MCF 10A (cell line): ENCODE measurements at regions of chr2 and their contacts with region 1.

Region 1: DNA sequence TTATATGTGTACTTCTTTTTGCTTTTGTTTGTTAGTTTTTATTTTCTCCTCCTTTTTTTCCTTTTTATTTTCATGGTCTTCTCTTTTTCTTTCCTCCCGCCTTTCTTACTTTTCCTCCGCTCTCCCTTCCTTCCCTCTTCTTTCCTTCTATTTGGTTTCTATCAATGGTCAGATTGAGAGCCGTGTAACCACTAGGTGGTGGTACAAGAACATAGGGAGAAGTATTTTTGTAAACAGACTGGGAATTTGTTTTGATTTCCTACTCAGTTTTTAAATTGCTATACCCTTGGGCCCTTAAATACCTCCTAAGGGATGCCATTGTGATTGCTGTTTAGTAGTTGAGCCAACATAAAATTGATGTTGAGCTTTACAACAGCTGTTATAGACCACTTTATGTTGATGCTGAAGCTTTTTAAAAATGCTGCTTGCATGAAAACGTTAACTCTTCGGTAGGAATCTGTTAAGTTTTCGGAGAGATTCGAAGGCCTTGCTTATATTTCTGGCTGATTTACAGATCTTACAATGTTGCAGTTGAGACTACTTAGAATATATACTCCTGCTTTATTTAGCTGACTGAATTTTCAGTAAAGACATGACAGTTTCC is 124.2 kb downstream of the UBE2E3 start:
- DNase-seq: peak; percentile 63
- H3K4me3 Mint-ChIP-seq: no peak overlapping the region
- H3K27ac Mint-ChIP-seq: no peak overlapping the region
- H3K4me1 Mint-ChIP-seq: peaks cover 8% of the 10 kb centered on the region
- H3K27me3 Mint-ChIP-seq: no peaks in the 10 kb centered on the region
- CTCF ChIP-seq: peak; percentile 70

Region 2: DNA sequence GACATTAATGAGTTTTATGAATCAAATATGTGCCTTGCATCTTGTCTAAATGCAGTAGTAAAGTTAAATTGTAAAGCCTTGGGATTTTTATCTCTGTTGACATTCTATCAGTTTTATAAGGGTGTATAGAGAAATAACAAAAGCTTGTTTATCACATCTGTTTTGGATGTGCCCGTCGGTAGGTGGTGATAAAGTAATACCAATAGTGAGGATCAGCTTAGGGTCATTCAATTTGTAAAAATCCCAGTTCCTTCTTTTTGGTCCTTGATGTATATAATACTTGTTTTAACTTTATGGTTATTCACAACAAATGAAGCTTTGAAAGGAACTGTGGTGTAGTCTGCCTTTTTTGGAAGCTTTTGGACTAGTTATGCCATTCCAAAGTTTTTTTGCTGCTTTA is 111.6 kb before region 1 on chr2:
- CTCF ChIA-PET with region 1: no interaction called
- POLR2A ChIA-PET with region 1: no interaction called
- intact Hi-C with region 1: no loop called
- DNase-seq: no peak
- H3K4me3 Mint-ChIP-seq: no peak overlapping the region
- H3K27ac Mint-ChIP-seq: no peak overlapping the region
- H3K4me1 Mint-ChIP-seq: peaks cover 15% of the 10 kb centered on the region
- H3K27me3 Mint-ChIP-seq: no peaks in the 10 kb centered on the region
- CTCF ChIP-seq: no peak

Region 3: DNA sequence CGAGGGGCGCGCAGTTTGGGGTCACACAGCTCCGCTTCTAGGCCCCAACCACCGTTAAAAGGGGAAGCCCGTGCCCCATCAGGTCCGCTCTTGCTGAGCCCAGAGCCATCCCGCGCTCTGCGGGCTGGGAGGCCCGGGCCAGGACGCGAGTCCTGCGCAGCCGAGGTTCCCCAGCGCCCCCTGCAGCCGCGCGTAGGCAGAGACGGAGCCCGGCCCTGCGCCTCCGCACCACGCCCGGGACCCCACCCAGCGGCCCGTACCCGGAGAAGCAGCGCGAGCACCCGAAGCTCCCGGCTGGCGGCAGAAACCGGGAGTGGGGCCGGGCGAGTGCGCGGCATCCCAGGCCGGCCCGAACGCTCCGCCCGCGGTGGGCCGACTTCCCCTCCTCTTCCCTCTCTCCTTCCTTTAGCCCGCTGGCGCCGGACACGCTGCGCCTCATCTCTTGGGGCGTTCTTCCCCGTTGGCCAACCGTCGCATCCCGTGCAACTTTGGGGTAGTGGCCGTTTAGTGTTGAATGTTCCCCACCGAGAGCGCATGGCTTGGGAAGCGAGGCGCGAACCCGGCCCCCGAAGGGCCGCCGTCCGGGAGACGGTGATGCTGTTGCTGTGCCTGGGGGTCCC is 352.6 kb after region 1 on chr2 and contains the start of gene ITGA4:
- CTCF ChIA-PET with region 1: interaction called, 13 read pairs
- POLR2A ChIA-PET with region 1: no interaction called
- intact Hi-C with region 1: no loop called
- DNase-seq: peak; percentile 34
- H3K4me3 Mint-ChIP-seq: peak within 1 kb of the TSS; percentile 62
- H3K27ac Mint-ChIP-seq: no peak within 1 kb of the TSS
- H3K4me1 Mint-ChIP-seq: no peaks in the 10 kb centered on the region
- H3K27me3 Mint-ChIP-seq: no peaks in the 10 kb centered on the region
- CTCF ChIP-seq: peak; percentile 44
- total RNA-seq, gene ITGA4: 0.19 and 0.42 TPM in 2 replicates